Endothelial cell of umbilical vein (primary cell): ENCODE measurements at regions of chr20 and their contacts with region 1.

Region 1: DNA sequence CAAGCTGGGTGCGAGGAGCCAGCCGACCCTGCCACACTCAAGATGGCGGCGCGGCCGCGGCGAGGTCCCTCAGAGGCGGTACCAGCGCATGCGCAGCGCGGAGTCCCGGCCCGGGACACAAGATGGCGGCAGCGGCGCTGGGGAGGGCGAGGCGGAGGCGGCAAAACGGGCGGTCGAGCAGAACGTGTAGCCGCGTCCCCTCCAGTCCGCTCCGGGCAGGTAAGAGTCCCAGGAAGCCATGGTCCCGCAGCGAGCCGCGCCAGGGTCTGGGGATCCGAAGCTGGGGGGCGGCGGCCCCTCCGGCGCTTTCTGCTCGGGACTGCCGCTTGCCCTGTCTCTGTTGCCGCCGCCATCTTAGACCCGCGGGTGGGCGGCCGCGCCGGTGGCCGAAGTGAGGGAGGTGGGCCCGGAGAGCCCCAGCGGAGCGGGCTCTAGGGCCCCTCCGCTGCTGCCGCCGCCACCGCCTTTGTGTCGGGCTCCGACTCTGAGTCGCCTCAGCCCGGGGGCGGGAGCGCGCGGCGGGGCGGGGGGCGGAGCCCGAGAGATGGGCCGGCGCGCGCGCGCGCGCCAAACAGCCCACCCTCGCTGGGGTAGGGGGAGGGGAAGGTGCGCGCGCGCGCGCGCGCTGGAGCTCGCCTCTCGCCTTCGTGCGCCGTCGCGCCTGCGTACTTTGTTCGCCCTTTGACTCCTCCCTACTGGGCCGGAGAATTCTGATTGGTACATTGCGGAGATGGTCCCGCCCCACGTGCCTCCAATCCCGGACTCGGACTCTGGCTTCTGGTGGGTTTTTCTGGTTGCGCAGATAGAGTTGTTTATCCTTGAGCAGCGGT is at the start of gene PCIF1:
- DNase-seq: peak; percentile 99
- H3K4me3 ChIP-seq: peak within 1 kb of the TSS; percentile 75 to 97 (median 89)
- H3K27ac ChIP-seq: peak within 1 kb of the TSS; percentile 89
- H3K4me1 ChIP-seq: peaks cover 14% of the 10 kb centered on the region
- H3K27me3 ChIP-seq: no peaks in the 10 kb centered on the region
- CTCF ChIP-seq: no peak
- POLR2A ChIP-seq: peak; percentile 94
- total RNA-seq, gene PCIF1: 25.8 and 27.2 TPM in 2 replicates

Region 2: DNA sequence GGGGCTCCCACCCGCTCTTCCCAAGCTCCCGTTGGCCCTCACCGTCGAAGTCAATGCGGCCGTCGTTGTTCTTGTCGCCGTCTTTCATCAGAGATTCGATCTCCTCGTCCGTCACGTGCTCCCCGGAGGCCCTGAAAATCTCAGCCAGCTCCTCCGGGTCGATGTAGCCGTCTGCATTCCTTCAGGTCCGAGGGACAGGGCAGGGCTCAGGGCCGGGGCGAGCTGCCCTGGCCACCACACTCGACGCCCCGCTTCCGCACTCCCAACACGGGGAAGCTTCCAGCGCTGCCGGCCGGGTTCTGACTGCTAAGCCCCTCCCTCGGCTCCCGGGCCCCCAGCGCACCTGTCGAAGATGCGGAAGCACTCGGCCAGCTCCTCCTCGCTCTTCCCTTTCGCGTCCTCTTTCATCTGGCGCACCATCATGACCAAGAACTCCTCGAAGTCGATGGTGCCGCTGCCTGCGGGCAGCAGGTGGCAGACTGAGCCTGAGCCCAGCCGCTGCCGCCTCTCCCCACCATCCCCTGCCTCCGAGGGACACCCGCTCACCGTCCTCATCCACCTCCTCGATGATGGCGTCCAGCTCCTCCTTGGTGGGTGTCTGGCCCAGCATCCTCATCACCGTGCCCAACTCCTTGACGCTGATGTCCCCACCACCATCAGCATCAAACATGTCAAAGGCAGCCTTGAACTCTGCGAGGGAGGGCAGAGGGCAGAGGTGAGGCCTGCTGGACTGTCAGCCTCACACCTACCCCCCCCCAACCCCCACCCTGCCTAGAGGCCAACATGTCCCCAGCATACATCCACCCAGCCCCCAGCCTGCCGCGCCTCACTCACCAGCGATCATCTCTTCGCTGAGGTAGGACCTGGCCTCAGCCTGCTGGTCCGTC is 110.6 kb before region 1 on chr20:
- CTCF ChIA-PET with region 1: interaction called, 4 read pairs
- POLR2A ChIA-PET with region 1: no interaction called
- dilution Hi-C with region 1: no loop called
- intact Hi-C with region 1: loop called (anchors 2 kb)
- DNase-seq: peak; percentile 46
- H3K4me3 ChIP-seq: peak overlapping the region in 1 of 3 experiments; percentile 17
- H3K27ac ChIP-seq: no peak overlapping the region
- H3K4me1 ChIP-seq: peaks cover 4% of the 10 kb centered on the region
- H3K27me3 ChIP-seq: peaks cover 11 to 16% of the 10 kb centered on the region in 2 experiments
- CTCF ChIP-seq: peak; percentile 40 to 75
- POLR2A ChIP-seq: no peak

Region 3: DNA sequence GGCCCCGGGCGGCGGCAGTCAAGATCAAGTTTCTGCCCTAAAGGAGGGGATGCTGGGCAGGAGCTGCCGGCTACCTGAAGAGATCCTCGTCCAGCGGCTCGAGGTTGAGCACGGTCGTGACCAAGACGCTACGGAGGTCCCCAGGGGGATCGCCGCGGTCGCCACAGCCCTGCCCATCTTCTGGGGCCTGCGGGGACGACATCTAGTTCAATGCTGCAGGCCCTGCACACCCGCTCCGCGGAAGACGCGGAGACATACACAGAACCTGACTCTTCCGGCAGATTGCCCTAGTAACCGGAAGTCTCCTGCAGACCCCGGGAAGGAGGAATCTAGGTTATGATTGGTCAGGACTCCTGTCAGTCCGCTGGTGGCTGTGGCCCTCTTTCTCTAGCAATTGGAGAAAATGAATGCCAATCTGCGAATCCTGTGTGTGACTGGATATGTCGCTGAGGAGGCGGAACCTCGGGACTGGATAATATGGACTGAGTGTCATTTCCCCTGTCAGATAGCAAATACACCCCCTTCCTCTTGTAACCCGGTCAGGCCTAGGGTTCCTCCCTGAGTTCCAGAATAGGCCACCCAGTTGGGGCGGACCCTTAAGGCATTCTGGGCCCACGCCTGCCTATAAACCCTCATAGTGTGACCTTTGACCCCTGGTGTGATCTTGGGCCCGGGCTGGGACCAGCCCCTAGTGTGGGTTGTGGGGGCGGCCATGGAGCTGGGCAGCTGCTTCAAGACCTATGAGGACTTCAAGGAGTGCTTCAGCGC is 77.5 kb before region 1 on chr20 and contains the starts of genes ACOT8 and ZSWIM3:
- CTCF ChIA-PET with region 1: interaction called, 4 read pairs
- POLR2A ChIA-PET with region 1: interaction called, 9 read pairs
- dilution Hi-C with region 1: no loop called
- intact Hi-C with region 1: loop called (anchors 2 kb)
- DNase-seq: peak; percentile 99
- H3K4me3 ChIP-seq: peak within 1 kb of the TSS; percentile 32 to 78 (median 66)
- H3K27ac ChIP-seq: peak within 1 kb of the TSS; percentile 51
- H3K4me1 ChIP-seq: peaks cover 12% of the 10 kb centered on the region
- H3K27me3 ChIP-seq: no peaks in the 10 kb centered on the region
- CTCF ChIP-seq: no peak
- POLR2A ChIP-seq: peak; percentile 91
- total RNA-seq, gene ACOT8: 15.5 and 15.8 TPM in 2 replicates
- total RNA-seq, gene ZSWIM3: 4.2 and 4.4 TPM in 2 replicates

Region 4: GRCh38 chr20:45880988-45881788 is 53.6 kb before region 1 on chr20 and contains the start of gene ZSWIM1:
- CTCF ChIA-PET with region 1: interaction called, 4 read pairs
- POLR2A ChIA-PET with region 1: interaction called, 12 read pairs
- dilution Hi-C with region 1: no loop called
- intact Hi-C with region 1: loop called (anchors 2 kb)
- DNase-seq: peak; percentile 100
- H3K4me3 ChIP-seq: peak within 1 kb of the TSS; percentile 51 to 93 (median 89)
- H3K27ac ChIP-seq: peak within 1 kb of the TSS; percentile 66
- H3K4me1 ChIP-seq: peaks cover 11% of the 10 kb centered on the region
- H3K27me3 ChIP-seq: no peaks in the 10 kb centered on the region
- CTCF ChIP-seq: no peak
- POLR2A ChIP-seq: peak; percentile 95
- total RNA-seq, gene ZSWIM1: 10.0 and 11.3 TPM in 2 replicates

Region 5: DNA sequence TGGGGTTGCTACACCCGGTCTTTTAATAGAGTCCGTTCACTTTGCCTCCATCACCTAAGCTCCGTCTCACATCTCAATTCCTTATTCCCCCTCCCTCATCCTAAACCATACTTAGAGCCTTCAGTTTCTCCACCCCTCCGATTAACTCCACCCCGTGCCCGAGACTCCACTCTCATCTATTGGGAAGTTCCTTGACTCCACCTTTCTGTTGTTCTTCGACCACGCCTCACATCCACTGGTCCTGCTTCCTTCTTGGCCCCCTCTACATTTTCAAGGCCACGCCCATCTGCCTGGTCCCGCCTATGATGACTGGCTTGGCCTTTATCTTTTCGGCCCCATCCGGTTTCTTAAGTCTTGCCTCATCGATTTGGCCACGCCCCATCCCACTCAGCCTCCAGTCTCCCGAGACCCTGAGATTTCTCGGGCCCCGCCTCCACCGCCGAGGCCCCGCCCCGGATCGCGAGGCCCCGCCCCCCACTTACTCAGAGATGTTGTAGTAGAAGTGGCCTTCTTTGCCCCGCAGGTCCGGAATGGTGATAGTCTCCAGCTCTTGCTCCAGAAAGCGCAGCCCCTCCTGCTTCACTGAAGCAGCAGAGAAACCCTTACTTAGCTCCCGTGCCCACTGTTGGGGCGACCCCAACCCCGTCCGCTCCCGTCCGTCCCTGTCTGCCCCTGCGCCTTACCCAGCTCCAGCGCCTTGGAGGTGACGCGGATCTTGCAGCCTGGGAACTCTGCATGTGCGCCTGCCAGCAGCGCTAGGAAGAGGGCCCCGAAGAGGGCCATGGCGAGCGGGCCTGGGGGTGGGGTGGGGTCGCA is 23.9 kb before region 1 on chr20:
- CTCF ChIA-PET with region 1: interaction called, 16 read pairs
- POLR2A ChIA-PET with region 1: interaction called, 22 read pairs
- dilution Hi-C with region 1: no loop called
- intact Hi-C with region 1: loop called (anchors 1 kb)
- DNase-seq: peak; percentile 100
- H3K4me3 ChIP-seq: peak overlapping the region; percentile 6 to 62 (median 37)
- H3K27ac ChIP-seq: peak overlapping the region; percentile 43
- H3K4me1 ChIP-seq: peaks cover 28% of the 10 kb centered on the region
- H3K27me3 ChIP-seq: no peaks in the 10 kb centered on the region
- CTCF ChIP-seq: no peak
- POLR2A ChIP-seq: peak; percentile 30

Region 6: GRCh38 chr20:45924391-45925261 is 10.2 kb before region 1 on chr20:
- CTCF ChIA-PET with region 1: interaction called, 19 read pairs
- POLR2A ChIA-PET with region 1: interaction called, 20 read pairs
- dilution Hi-C with region 1: no loop called
- intact Hi-C with region 1: no loop called
- DNase-seq: peak; percentile 73
- H3K4me3 ChIP-seq: peak overlapping the region in 1 of 3 experiments; percentile 2
- H3K27ac ChIP-seq: no peak overlapping the region
- H3K4me1 ChIP-seq: peaks cover 14% of the 10 kb centered on the region
- H3K27me3 ChIP-seq: no peaks in the 10 kb centered on the region
- CTCF ChIP-seq: no peak
- POLR2A ChIP-seq: no peak

Region 7: DNA sequence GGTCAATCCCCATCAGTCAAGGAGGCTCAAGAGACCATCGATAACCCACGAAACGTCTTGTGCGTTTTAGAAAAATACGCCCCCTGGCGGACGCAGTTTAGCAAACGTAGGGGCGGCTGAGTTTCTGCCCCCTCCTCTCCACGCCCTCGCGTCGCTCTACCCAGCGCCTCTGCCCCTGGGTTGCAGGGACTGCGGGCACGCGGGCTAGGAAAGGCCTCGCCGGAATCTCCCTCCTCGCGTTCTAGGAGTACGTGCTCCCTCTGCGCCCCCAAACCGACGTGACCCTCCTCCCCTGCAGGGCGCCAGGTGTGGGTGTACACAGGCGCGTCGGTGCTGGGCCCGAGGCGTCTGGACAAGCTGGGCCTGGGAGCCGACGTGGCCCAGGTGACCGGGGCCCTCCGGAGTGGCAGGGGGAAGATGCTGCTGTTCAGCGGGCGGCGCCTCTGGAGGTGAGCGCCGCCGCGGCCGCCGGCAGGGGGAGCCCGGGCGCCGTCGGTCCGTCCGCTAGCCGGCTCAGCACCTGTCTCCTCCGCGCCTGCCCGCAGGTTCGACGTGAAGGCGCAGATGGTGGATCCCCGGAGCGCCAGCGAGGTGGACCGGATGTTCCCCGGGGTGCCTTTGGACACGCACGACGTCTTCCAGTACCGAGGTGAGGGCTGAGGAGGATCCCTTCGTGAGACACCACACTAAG is 79.2 kb after region 1 on chr20:
- CTCF ChIA-PET with region 1: no interaction called
- POLR2A ChIA-PET with region 1: no interaction called
- dilution Hi-C with region 1: no loop called
- intact Hi-C with region 1: no loop called
- DNase-seq: peak; percentile 31
- H3K4me3 ChIP-seq: no peak overlapping the region
- H3K27ac ChIP-seq: no peak overlapping the region
- H3K4me1 ChIP-seq: no peaks in the 10 kb centered on the region
- H3K27me3 ChIP-seq: peaks cover 39 to 46% of the 10 kb centered on the region in 2 experiments
- CTCF ChIP-seq: peak; percentile 74 to 85
- POLR2A ChIP-seq: no peak